ENCODE measurements at regions of chr9 and their contacts with region 1.

Region 1: GRCh38 chr9:121201738-121202533 is at the start of gene RAB14:
- DNase-seq: peak; percentile 100
- H3K4me3 Mint-ChIP-seq: peak within 1 kb of the TSS; percentile 94
- H3K27ac Mint-ChIP-seq: peak within 1 kb of the TSS; percentile 91
- H3K4me1 Mint-ChIP-seq: peaks cover 40% of the 10 kb centered on the region
- H3K27me3 Mint-ChIP-seq: peaks cover 3% of the 10 kb centered on the region
- total RNA-seq, gene RAB14: 61.4 and 65.1 TPM in 2 replicates

Region 2: DNA sequence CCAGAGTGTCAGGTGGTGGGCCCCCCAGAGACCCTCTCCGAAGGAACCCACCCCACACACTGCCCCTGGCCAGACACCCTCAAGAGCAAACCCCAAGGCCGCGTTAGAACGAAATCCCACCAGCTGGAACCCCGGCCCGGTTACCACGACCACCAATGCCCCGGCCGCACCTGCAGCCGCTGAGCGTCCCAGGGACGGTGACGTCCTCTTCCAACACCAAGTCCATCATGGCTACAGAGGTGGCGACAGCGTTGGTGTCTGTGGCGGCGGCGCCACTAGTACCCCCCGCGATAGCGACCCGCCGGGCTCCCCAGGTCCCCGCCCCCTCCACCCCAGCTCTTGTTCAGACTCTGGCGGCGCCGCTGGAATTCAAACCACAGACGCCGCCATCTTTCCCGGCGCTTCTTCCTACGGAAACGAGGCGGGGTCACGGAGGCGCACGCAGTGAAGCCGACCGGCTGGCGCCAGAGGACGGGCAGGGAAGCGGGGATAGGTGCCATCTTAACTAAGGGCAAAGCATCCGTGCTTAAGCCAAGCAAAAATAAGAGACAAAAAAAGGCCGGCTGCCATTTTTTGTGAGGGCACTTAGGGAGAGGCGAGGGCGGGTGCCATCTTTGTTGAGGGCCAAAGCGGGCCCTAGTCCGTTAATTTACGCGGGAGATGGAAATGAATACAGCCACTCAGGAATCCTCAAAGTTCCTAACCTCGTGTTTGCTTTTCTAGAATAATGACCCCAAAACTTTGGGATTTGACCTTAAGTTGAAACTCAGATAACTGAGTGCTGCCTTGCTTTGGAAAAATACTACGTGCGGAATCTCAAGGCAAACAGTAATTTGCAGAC is 622.0 kb before region 1 on chr9 and contains the start of gene CDK5RAP2:
- intact Hi-C with region 1: loop called (anchors 2 kb)
- DNase-seq: peak; percentile 98
- H3K4me3 Mint-ChIP-seq: peak within 1 kb of the TSS; percentile 98
- H3K27ac Mint-ChIP-seq: peak within 1 kb of the TSS; percentile 94
- H3K4me1 Mint-ChIP-seq: peaks cover 36% of the 10 kb centered on the region
- H3K27me3 Mint-ChIP-seq: no peaks in the 10 kb centered on the region
- total RNA-seq, gene CDK5RAP2: 69.3 and 70.0 TPM in 2 replicates

Region 3: GRCh38 chr9:121074635-121075385 is 127.1 kb before region 1 on chr9 and contains the start of gene CNTRL:
- intact Hi-C with region 1: loop called (anchors 1 kb)
- DNase-seq: peak; percentile 97
- H3K4me3 Mint-ChIP-seq: peak within 1 kb of the TSS; percentile 100
- H3K27ac Mint-ChIP-seq: peak within 1 kb of the TSS; percentile 98
- H3K4me1 Mint-ChIP-seq: peaks cover 52% of the 10 kb centered on the region
- H3K27me3 Mint-ChIP-seq: no peaks in the 10 kb centered on the region
- total RNA-seq, gene CNTRL: 68.3 and 69.4 TPM in 2 replicates

Region 4: GRCh38 chr9:121121582-121122087 is 80.3 kb before region 1 on chr9:
- intact Hi-C with region 1: loop called (anchors 1 kb)
- DNase-seq: peak; percentile 99
- H3K4me3 Mint-ChIP-seq: peak overlapping the region; percentile 87
- H3K27ac Mint-ChIP-seq: peak overlapping the region; percentile 89
- H3K4me1 Mint-ChIP-seq: peaks cover 40% of the 10 kb centered on the region
- H3K27me3 Mint-ChIP-seq: no peaks in the 10 kb centered on the region

Region 5: DNA sequence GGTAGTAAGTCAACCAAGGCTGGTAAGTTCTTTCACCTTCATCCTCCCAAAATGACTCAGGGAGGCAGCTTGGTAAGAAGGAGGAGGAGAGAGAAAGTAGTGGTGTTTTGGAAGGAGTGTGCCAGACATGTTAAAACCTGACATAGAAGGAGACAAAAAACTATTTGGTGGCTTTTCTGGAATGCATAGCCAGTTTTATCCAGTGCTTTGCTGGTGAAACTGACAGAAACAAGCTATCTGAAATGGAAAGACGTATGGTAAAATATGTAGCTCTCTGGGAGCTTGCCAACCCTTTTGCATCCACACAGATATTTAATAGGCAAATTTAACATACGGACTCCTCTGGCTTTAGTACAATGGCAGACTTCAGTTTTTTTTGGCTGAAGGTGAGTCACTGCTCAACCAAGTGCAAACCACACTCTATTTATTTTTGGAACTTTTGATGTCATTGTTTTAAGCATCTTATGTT is 45.6 kb before region 1 on chr9:
- intact Hi-C with region 1: loop called (anchors 2 kb)
- DNase-seq: peak; percentile 69
- H3K4me3 Mint-ChIP-seq: peak overlapping the region; percentile 16
- H3K27ac Mint-ChIP-seq: peak overlapping the region; percentile 88
- H3K4me1 Mint-ChIP-seq: peaks cover 33% of the 10 kb centered on the region
- H3K27me3 Mint-ChIP-seq: no peaks in the 10 kb centered on the region

Region 6: GRCh38 chr9:121278535-121279261 is 76.8 kb after region 1 on chr9:
- intact Hi-C with region 1: no loop called
- DNase-seq: peak; percentile 82
- H3K4me3 Mint-ChIP-seq: no peak overlapping the region
- H3K27ac Mint-ChIP-seq: peak overlapping the region; percentile 8
- H3K4me1 Mint-ChIP-seq: peaks cover 14% of the 10 kb centered on the region
- H3K27me3 Mint-ChIP-seq: peaks cover 2% of the 10 kb centered on the region

Region 7: DNA sequence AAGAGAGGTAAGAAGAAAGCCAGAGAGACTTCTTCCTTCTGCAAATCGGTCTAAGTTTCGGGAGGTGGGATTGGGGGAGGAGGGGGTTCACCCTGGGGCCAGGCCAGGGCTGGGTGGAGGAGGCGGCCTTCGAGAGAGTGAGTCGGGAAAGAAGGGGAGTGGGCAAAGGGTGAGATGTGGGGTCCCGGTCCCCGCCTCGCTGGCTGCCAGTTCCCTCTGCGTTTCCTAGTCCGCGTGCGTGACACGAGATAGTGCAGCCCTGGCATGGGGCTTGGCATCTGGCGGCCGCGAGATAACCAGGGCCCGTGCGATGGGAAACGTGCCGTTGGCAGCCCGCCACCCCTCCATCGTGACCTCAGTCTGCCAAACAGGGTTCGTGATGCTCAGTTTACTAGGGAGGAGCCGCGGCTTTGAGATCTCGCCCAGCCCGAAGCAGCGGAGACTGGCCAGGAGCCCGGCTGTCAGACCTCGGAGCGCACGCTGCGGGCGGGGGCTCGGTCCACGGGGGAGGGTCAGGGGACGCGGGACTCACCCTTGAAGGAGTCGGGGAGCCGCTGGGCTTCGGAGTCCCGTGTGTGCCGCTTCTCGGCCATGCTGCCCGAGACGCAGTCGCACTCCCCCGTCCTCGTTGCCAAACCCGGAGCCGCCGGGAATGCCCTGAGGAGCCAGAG is 167.8 kb after region 1 on chr9 and contains the start of gene STOM:
- intact Hi-C with region 1: loop called (anchors 1 kb)
- DNase-seq: no peak
- H3K4me3 Mint-ChIP-seq: peak within 1 kb of the TSS; percentile 84
- H3K27ac Mint-ChIP-seq: peak within 1 kb of the TSS; percentile 92
- H3K4me1 Mint-ChIP-seq: peaks cover 43% of the 10 kb centered on the region
- H3K27me3 Mint-ChIP-seq: no peaks in the 10 kb centered on the region
- total RNA-seq, gene STOM: 48.3 and 50.3 TPM in 2 replicates